ENCODE measurements at regions of chr18 and their contacts with region 1.

Region 1: DNA sequence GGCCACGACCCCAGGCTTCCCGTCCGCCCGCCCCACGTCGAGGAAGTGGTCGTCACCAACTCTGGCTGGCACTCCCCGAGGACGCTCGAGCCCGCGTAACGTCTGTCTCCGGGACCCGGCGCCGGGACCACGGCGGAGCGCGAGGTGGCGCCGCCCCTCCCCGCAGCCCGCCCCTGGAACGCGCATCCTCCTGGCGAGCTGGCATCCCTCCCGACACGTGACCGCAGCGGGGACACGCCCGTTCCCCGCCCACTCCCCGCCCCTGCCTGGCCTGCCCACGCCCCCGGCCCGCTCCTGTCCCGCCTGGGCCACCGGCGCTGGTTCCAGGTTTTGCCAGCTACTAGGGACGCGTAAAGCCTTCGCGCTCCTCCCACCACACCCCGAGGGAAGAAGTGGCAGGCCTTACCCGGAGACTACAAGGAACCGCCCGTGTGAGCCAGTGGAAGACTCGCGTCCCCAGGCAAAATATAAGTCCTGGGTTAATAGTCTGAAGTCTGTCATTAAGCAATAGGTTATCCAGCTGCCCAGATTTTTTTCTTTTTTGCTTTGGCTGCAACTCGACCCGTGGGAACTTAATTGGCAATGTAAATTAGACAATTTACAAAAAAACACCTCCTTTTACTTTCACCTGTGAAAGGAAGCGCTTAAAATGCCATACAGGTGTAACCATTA is at the start of gene OSBPL1A:
- DNase-seq: peak; percentile 94
- H3K4me3 Mint-ChIP-seq: peak within 1 kb of the TSS; percentile 77
- H3K27ac Mint-ChIP-seq: peak within 1 kb of the TSS; percentile 88
- H3K4me1 Mint-ChIP-seq: peaks cover 8% of the 10 kb centered on the region
- H3K27me3 Mint-ChIP-seq: no peaks in the 10 kb centered on the region
- CTCF ChIP-seq: no peak
- total RNA-seq, gene OSBPL1A: 14.8 and 21.5 TPM in 2 replicates

Region 2: GRCh38 chr18:24231773-24232735 is 165.8 kb before region 1 on chr18:
- CTCF ChIA-PET with region 1: no interaction called
- POLR2A ChIA-PET with region 1: no interaction called
- intact Hi-C with region 1: no loop called
- DNase-seq: peak; percentile 57
- H3K4me3 Mint-ChIP-seq: no peak overlapping the region
- H3K27ac Mint-ChIP-seq: no peak overlapping the region
- H3K4me1 Mint-ChIP-seq: peaks cover 21% of the 10 kb centered on the region
- H3K27me3 Mint-ChIP-seq: no peaks in the 10 kb centered on the region
- CTCF ChIP-seq: no peak

Region 3: GRCh38 chr18:24271381-24272331 is 126.2 kb before region 1 on chr18:
- CTCF ChIA-PET with region 1: no interaction called
- POLR2A ChIA-PET with region 1: interaction called, 23 read pairs
- intact Hi-C with region 1: no loop called
- DNase-seq: peak; percentile 79
- H3K4me3 Mint-ChIP-seq: peak overlapping the region; percentile 96
- H3K27ac Mint-ChIP-seq: peak overlapping the region; percentile 65
- H3K4me1 Mint-ChIP-seq: peaks cover 26% of the 10 kb centered on the region
- H3K27me3 Mint-ChIP-seq: no peaks in the 10 kb centered on the region
- CTCF ChIP-seq: no peak

Region 4: GRCh38 chr18:24413148-24413547 is 15.3 kb after region 1 on chr18:
- CTCF ChIA-PET with region 1: interaction called, 5 read pairs
- POLR2A ChIA-PET with region 1: interaction called, 15 read pairs
- intact Hi-C with region 1: no loop called
- DNase-seq: peak; percentile 36
- H3K4me3 Mint-ChIP-seq: no peak overlapping the region
- H3K27ac Mint-ChIP-seq: no peak overlapping the region
- H3K4me1 Mint-ChIP-seq: peaks cover 9% of the 10 kb centered on the region
- H3K27me3 Mint-ChIP-seq: no peaks in the 10 kb centered on the region
- CTCF ChIP-seq: peak; percentile 33

Region 5: DNA sequence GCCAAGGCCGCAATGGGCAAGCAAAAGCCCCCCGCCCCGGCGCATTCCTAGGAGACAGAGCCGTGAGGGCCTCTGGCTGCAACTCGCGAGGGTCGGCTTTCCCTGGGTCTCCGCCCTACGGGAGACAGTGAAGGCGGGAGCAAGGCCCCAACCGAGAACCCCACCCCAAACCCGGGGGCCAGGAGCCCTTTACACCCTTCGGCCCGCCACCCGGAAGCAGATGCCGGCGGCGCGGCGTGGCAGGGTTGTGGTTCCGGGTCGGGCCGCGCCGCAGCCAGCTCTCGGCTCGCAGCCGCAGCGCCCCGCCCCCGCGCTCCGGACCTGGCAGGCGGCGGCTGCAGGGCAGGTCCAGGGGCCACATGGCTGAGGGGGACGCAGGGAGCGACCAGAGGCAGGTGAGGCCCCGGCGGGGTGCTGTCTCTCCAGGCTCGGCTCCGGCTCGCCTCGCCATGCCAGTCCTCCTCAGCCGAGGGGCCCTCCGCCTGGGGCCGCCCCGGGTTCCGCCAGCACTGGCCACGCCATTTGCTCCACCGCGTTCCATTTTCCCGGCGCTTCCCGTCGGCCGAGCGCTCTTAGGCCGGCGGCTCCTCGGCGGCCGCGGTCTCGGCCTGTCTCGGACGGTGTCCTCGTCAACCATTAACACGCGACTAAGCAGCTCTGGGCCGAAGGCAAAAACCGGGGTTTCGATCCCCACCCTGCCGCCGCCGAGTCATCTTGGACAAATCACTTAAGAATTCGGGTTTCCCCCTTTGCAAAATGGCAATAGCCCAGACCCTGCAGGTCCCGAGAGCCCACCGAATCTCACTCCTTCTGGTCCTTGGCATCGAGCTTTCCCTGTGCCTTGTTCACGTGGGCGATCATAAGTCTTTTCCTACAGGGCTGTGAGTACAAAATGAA is 28.8 kb after region 1 on chr18 and contains the start of gene IMPACT:
- CTCF ChIA-PET with region 1: interaction called, 4 read pairs
- POLR2A ChIA-PET with region 1: interaction called, 103 read pairs
- intact Hi-C with region 1: loop called (anchors 2 kb)
- DNase-seq: peak; percentile 82
- H3K4me3 Mint-ChIP-seq: peak within 1 kb of the TSS; percentile 92
- H3K27ac Mint-ChIP-seq: peak within 1 kb of the TSS; percentile 94
- H3K4me1 Mint-ChIP-seq: peaks cover 6% of the 10 kb centered on the region
- H3K27me3 Mint-ChIP-seq: no peaks in the 10 kb centered on the region
- CTCF ChIP-seq: no peak
- total RNA-seq, gene IMPACT: 88.3 and 97.2 TPM in 2 replicates

Region 6: DNA sequence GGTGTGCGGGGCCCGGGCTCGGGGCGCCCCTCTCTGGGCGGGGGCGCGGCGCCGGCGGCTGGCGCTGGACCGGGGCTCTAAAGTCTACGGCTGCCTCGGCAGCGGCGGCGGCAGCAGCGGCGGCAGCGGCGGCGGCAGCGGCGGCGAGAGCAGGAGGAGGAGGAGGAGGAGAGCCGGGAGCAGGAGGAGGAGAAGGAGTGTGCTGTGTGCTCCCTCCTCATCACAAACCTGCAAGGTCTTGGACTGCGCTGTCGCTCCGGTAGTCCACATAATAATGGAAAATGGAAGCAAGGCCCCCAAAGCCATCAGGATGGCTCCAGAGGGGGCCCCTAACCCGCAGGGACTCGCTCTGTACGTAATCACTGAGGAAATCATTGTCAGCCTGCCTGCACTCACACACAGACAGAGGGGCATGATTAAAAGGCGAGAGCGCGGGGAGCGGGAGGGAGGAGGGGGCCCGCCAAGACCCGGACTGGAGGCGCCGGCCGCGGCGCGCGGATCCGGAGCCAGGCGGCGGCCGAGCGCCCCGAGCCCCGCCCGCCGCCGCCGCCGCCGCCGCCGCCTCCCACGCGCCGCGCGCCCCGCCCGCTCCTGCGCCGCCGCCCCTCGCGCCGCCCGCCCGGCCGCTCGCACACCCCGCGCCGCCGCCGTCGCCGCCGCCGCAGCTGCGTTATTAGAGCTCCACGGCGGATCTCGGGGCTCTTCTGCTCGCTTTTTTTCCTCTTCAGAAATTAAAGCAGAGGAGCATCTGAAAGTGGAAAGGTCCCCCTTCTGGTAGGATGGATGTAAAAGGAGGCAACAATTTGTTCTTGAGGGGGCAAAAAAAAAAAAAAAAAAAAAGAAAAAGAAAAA is 954.2 kb after region 1 on chr18 and contains the start of gene ZNF521:
- CTCF ChIA-PET with region 1: no interaction called
- POLR2A ChIA-PET with region 1: no interaction called
- intact Hi-C with region 1: loop called (anchors 5 kb)
- DNase-seq: peak; percentile 42
- H3K4me3 Mint-ChIP-seq: peak within 1 kb of the TSS; percentile 75
- H3K27ac Mint-ChIP-seq: no peak within 1 kb of the TSS
- H3K4me1 Mint-ChIP-seq: peaks cover 5% of the 10 kb centered on the region
- H3K27me3 Mint-ChIP-seq: peaks cover 61% of the 10 kb centered on the region
- CTCF ChIP-seq: peak; percentile 14
- total RNA-seq, gene ZNF521: not detected in 2 replicates

Measured in MCF 10A (cell line).